ENCODE measurements at regions of chr10 and their contacts with region 1.

Region 1: DNA sequence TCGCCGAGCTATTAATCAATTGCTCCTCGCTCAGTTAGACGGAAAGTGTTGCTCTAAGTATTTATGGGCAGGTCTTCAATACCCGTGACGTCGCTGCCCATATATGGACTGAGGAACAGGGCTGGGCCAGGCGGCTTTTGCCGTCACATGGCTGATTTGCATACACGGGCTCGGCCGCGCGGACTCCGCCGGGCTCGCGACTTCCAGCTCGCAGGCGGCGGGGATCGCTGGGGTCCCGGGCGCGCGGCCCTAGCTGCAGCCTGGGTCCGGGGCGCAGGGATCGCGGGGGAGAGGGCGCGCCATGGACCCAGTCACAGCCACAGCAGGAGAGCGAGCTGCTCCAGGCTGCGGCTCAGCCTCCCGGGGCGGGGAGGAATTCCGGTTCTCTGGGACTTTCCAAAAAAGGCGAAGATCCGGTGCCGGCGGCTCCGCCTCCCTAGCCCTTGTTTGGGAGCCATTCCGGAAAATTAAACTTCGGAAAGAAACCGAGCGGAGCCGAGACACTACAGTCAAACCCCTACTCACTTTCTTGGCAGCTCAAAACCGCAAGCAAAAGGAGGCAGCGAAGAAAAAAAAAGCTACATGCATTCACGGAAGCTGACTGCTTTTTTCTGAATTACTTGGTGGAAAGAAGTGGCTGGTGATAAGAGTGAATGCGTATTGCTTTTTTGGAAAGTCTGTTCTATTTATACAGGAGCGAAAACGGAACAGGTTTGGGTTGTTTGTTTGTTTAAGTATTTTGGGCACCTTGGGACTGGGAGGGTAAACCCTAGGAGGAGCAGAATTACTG is at the start of gene EGR2:
- DNase-seq: peak; percentile 96 to 97
- ATAC-seq: peak; percentile 92
- H3K4me3 ChIP-seq: peak within 1 kb of the TSS; percentile 51 to 74
- H3K27ac ChIP-seq: peak within 1 kb of the TSS; percentile 50 to 66
- H3K4me1 ChIP-seq: no peaks in the 10 kb centered on the region
- H3K27me3 ChIP-seq: no peaks in the 10 kb centered on the region
- total RNA-seq, gene EGR2: 11.4 to 23.0 TPM

Region 2: DNA sequence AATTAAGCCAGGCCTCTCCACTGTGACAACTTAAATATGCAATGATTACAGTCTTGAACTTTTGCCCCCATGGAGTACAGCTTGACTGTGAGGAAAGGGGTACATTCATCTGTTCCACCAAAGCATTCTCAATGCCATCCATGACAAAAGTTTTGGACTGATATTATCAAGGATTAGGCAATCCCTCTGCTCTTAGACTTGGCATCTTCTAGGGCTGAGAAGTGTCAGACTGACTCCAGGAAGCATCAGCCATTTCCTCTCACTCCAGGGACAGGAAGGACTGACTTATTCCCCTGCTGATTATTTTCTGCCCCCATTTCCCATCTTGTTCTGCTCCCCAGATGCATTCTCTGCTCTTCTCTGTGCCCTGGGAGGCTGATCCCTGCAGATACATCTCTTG is 372.7 kb before region 1 on chr10:
- intact Hi-C with region 1: loop called (anchors 5 to 10 kb)
- DNase-seq: no peak
- ATAC-seq: no peak
- H3K4me3 ChIP-seq: no peak overlapping the region
- H3K27ac ChIP-seq: no peak overlapping the region
- H3K4me1 ChIP-seq: peaks cover 4 to 16% of the 10 kb centered on the region in 2 donors
- H3K27me3 ChIP-seq: no peaks in the 10 kb centered on the region

Measured in aorta (tissue), 5 donors.